Esophagus squamous epithelium (tissue), 5 donors: ENCODE measurements at regions of chr11 and their contacts with region 1.

Region 1: GRCh38 chr11:8225589-8226036 is 38.1 kb downstream of the LMO1 start:
- DNase-seq: no peak
- H3K4me3 ChIP-seq: no peak overlapping the region
- H3K27ac ChIP-seq: no peak overlapping the region
- H3K4me1 ChIP-seq: peaks cover 21 to 51% (median 25%) of the 10 kb centered on the region in 3 donors
- H3K27me3 ChIP-seq: peaks cover 0 to 55% (median 0%) of the 10 kb centered on the region in 4 donors
- CTCF ChIP-seq: peak; percentile 85 to 96 (median 92)
- POLR2A ChIP-seq: no peak

Region 2: DNA sequence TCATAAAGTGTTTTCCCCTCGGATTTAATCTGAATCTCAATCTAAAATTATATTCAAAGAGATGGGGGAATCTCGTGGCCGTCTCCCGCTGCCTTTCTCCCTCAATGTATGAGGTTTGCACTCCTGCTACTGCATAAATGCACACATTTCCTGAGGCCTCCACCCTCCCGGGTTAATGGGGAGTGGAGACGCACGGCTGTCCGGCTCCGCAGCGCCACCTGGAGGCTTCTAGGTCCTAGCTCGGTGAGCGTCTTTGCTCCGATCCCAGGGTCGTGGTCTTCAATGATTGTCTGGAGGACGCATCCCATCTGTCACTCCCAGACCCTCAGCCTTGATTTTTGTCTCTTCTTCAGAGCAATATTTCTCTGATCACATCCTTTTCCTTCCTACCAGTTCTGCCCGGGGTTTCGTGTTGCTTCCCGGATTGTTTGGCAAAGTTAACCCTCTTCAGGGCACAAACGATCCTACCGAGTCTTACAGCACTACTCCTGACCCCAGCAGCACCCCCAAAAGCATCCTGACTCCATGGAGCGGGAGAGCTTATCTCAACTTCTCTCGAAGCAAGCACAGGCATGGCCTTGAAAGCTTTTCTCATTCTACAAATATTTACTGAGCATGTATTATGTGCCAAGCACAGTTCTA is 38.3 kb after region 1 on chr11 and contains the start of gene LMO1:
- intact Hi-C with region 1: loop called (anchors 5 kb)
- DNase-seq: no peak
- H3K4me3 ChIP-seq: peak within 1 kb of the TSS; percentile 28 to 71 (median 51)
- H3K27ac ChIP-seq: peak within 1 kb of the TSS in 1 of 4 donors; percentile 29
- H3K4me1 ChIP-seq: peaks cover 23 to 46% (median 32%) of the 10 kb centered on the region in 3 donors
- H3K27me3 ChIP-seq: peaks cover 8 to 98% (median 16%) of the 10 kb centered on the region in 4 donors
- CTCF ChIP-seq: peak; percentile 43 to 86 (median 79)
- POLR2A ChIP-seq: no peak
- total RNA-seq, gene LMO1: not detected

Region 3: DNA sequence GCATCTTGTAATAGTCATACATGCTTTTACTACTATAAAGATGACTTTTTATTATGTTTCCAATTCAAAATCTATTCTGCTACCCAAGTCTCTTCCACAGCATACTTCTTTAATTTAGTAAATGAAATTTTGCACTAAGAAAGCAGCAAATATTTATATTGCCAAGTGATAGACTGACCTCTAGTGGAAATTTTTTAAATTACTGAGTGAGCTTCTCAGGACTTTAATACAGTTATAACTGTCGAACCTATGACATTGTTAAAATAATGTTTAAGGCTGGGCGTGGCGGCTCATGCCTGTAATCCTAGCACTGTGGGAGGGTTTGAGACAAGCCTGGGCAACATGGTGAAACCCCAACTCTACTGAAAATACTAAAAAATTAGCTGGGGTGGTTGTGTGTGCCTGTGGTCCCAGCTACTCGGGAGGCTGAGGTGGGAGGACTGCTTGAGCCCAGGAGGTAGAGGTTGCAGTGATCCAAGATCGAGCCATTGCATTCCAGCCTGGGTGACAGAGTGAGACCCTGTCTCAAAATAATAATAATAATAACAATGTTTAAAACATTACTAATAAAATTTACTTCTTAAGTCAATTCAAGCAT is 341.1 kb after region 1 on chr11:
- intact Hi-C with region 1: loop called (anchors 10 kb)
- DNase-seq: no peak
- H3K4me3 ChIP-seq: no peak overlapping the region
- H3K27ac ChIP-seq: no peak overlapping the region
- H3K4me1 ChIP-seq: peaks cover 0 to 11% (median 0%) of the 10 kb centered on the region in 3 donors
- H3K27me3 ChIP-seq: no peaks in the 10 kb centered on the region
- CTCF ChIP-seq: peak; percentile 42 to 82 (median 71)
- POLR2A ChIP-seq: no peak